Activated B cell treated with CpG ODN at 0.5 μM for 24 hours (primary cell): ENCODE measurements at regions of chr19 and their contacts with region 1.

Region 1: DNA sequence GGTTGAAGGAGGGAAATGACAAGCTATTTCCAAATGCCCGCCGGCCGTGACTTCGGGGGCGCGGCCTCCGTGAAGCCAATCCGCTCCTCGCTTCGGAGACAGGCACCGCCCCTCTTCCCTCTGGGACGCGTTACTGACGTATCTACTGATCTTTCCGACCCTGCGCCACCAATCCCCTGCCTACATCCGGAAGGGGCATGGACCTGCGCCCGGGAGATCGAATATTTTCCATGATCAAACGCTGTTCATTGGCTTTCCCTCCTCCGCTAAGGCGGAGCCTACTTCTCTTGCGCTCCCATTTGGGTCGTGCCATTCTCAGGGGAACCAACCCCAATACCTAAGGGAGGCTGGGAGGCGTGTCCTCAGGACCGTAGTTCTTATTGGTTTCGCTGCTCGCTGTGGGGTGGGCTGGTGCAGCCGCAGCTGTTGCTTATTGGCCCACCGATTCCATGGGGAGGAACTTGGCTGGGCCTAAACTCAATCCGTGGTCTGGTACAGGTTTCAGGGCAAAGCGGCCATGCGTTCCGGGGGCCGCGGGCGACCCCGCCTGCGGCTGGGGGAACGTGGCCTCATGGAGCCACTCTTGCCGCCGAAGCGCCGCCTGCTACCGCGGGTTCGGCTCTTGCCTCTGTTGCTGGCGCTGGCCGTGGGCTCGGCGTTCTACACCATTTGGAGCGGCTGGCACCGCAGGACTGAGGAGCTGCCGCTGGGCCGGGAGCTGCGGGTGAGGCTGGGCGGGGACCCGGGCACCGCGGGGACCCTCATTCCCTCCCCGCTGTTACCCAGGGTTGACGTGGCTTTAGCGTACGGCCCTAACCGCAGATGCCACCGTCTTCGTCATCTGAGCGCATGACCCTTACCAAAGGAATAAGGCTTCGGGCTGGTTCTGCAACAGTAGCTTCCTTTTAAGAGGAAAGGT is at the start of gene QPCTL:
- DNase-seq: peak; percentile 90
- ATAC-seq: peak; percentile 86
- H3K4me3 Mint-ChIP-seq: peak within 1 kb of the TSS; percentile 94
- H3K27ac Mint-ChIP-seq: peak within 1 kb of the TSS; percentile 98
- H3K4me1 Mint-ChIP-seq: peaks cover 30% of the 10 kb centered on the region
- H3K27me3 Mint-ChIP-seq: no peaks in the 10 kb centered on the region
- CTCF ChIP-seq: no peak
- total RNA-seq, gene QPCTL: 19.3 and 21.1 TPM in 2 replicates

Region 2: GRCh38 chr19:45455707-45456499 is 236.5 kb before region 1 on chr19:
- CTCF ChIA-PET with region 1: no interaction called
- POLR2A ChIA-PET with region 1: interaction called, 13 read pairs
- intact Hi-C with region 1: loop called (anchors 2 kb)
- DNase-seq: peak; percentile 69
- ATAC-seq: peak; percentile 59
- H3K4me3 Mint-ChIP-seq: peak overlapping the region; percentile 67
- H3K27ac Mint-ChIP-seq: peak overlapping the region; percentile 80
- H3K4me1 Mint-ChIP-seq: peaks cover 44% of the 10 kb centered on the region
- H3K27me3 Mint-ChIP-seq: no peaks in the 10 kb centered on the region
- CTCF ChIP-seq: no peak

Region 3: DNA sequence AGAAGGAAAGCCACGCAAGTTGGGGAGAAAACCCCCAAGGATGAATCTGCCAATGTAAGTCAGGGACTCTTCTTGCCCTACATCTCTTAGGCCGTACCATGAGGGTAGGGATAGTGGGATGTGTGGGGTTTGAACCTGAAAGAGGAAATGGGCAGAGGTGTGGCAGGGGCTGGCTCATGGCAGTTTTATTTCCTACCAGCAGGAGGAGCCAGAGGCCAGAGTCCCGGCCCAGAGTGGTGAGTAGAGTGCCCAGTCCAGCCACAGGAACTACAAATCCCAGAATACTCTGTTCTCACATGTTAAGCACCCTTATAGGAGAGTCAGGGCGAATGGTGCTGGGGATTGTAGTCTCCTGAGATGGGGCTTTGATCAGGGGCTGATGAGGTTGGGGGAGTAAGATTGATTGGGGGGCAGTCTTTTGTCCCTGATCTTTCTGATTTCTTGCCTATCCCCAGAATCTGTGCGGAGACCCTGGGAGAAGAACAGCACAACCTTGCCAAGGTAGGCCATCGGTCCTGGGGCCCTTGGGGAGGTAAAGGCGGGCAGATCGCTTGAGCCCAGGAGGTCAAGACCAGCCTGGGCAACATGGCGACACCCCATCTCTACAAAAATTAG is 168.7 kb before region 1 on chr19:
- CTCF ChIA-PET with region 1: no interaction called
- POLR2A ChIA-PET with region 1: no interaction called
- intact Hi-C with region 1: loop called (anchors 1 kb)
- DNase-seq: peak; percentile 62
- ATAC-seq: peak; percentile 98
- H3K4me3 Mint-ChIP-seq: no peak overlapping the region
- H3K27ac Mint-ChIP-seq: peak overlapping the region; percentile 71
- H3K4me1 Mint-ChIP-seq: peaks cover 25% of the 10 kb centered on the region
- H3K27me3 Mint-ChIP-seq: no peaks in the 10 kb centered on the region
- CTCF ChIP-seq: peak; percentile 58

Region 4: GRCh38 chr19:45681391-45682015 is 10.9 kb before region 1 on chr19:
- CTCF ChIA-PET with region 1: interaction called, 13 read pairs
- POLR2A ChIA-PET with region 1: interaction called, 26 read pairs
- intact Hi-C with region 1: loop called (anchors 1 kb)
- DNase-seq: peak; percentile 92
- ATAC-seq: peak; percentile 92
- H3K4me3 Mint-ChIP-seq: peak overlapping the region; percentile 77
- H3K27ac Mint-ChIP-seq: no peak overlapping the region
- H3K4me1 Mint-ChIP-seq: peaks cover 17% of the 10 kb centered on the region
- H3K27me3 Mint-ChIP-seq: peaks cover 7% of the 10 kb centered on the region
- CTCF ChIP-seq: peak; percentile 69

Region 5: GRCh38 chr19:45717166-45717982 is 24.9 kb after region 1 on chr19:
- CTCF ChIA-PET with region 1: interaction called, 9 read pairs
- POLR2A ChIA-PET with region 1: interaction called, 123 read pairs
- intact Hi-C with region 1: loop called (anchors 1 kb)
- DNase-seq: peak; percentile 92
- ATAC-seq: peak; percentile 95
- H3K4me3 Mint-ChIP-seq: peak overlapping the region; percentile 96
- H3K27ac Mint-ChIP-seq: peak overlapping the region; percentile 92
- H3K4me1 Mint-ChIP-seq: peaks cover 35% of the 10 kb centered on the region
- H3K27me3 Mint-ChIP-seq: no peaks in the 10 kb centered on the region
- CTCF ChIP-seq: no peak

Region 6: DNA sequence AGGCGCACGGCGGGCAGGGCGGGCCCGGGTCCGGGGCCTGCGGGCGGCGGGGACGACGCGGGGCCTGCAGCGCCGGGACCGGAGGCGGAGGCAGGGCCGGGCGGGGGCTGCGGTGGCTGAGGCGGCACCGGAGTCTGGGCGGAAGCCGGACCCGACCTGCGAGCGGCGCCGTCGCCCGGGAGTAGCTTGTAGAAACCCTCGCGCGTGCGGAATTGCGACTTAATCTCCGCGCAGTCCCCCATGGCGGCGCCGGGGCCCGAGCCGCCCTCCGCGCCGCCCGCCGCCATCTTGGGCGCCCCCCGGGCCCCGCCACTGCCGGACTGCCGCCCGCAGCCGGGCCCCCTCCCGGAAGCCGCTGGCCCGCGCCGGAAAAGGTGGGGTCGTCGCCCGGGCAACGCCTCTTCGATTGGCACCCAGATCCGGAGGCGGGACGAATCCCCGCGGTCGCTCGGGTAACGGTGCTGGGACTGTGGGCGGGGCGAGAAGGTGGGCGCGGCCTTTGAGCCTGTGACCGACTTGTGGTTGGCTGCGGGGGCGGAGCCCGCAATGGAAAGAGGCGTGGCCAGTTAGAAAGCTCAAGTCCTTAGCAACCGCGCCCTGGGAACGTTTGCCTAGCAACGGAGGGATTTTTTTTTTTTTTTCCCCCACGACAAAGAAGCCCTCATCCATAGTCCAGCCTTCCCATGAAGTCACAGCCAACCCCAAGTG is 100.2 kb after region 1 on chr19 and contains the start of gene DMWD:
- CTCF ChIA-PET with region 1: interaction called, 3 read pairs
- POLR2A ChIA-PET with region 1: interaction called, 3 read pairs
- intact Hi-C with region 1: loop called (anchors 5 kb)
- DNase-seq: peak; percentile 100
- ATAC-seq: peak; percentile 96
- H3K4me3 Mint-ChIP-seq: peak within 1 kb of the TSS; percentile 88
- H3K27ac Mint-ChIP-seq: peak within 1 kb of the TSS; percentile 76
- H3K4me1 Mint-ChIP-seq: peaks cover 27% of the 10 kb centered on the region
- H3K27me3 Mint-ChIP-seq: peaks cover 5% of the 10 kb centered on the region
- CTCF ChIP-seq: no peak
- total RNA-seq, gene DMWD: 64.7 and 77.3 TPM in 2 replicates